WTC11 (cell line): ENCODE measurements at regions of chr16 and their contacts with region 1.

Region 1: DNA sequence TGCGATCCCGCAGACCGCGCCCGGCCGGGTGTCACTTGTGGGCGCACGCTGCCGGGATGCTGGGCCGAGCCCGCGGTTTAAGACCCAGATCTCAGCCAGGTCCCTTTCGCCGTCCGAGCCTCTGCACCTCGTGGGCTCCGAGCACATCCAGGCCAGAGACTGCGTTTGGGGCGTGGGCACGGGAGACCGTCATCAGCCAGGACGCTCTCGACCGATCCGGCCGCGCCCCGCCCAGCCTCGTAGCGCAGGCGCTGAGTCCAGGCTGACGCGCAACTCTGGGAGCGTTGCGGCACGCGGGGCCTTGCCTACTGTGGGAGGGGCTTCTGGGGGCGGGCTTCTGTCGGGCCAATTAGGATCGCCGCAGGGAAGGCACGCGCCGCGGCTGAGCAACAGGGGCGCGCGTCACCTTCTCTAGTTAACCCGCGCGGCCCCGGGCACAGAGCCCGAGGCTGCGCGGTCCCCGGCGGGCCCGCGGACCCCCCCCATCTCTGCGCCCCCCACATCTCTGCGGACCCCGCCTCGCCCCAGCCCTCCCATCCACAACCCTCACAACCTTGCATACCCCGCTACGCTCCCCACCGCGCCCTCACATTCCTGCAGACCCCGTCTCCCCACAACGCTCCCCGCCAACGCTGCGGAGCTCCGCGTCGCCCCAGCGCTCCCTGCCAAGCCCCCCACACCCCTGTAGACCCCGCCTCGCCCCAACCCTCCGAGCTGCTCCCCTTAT is 722 bp upstream of the CEMP1 start:
- DNase-seq: peak; percentile 98
- ATAC-seq: peak; percentile 88
- H3K4me3 Mint-ChIP-seq: peak overlapping the region; percentile 94
- H3K27ac Mint-ChIP-seq: peak overlapping the region; percentile 98
- H3K4me1 Mint-ChIP-seq: 0 out of 2 replicates have a peak, but pooled peaks cover 5% of the 10 kb centered on the region
- H3K27me3 Mint-ChIP-seq: peaks cover 8% of the 10 kb centered on the region; the same call in 1 of the 2 replicates
- CTCF ChIP-seq: no peak

Region 2: DNA sequence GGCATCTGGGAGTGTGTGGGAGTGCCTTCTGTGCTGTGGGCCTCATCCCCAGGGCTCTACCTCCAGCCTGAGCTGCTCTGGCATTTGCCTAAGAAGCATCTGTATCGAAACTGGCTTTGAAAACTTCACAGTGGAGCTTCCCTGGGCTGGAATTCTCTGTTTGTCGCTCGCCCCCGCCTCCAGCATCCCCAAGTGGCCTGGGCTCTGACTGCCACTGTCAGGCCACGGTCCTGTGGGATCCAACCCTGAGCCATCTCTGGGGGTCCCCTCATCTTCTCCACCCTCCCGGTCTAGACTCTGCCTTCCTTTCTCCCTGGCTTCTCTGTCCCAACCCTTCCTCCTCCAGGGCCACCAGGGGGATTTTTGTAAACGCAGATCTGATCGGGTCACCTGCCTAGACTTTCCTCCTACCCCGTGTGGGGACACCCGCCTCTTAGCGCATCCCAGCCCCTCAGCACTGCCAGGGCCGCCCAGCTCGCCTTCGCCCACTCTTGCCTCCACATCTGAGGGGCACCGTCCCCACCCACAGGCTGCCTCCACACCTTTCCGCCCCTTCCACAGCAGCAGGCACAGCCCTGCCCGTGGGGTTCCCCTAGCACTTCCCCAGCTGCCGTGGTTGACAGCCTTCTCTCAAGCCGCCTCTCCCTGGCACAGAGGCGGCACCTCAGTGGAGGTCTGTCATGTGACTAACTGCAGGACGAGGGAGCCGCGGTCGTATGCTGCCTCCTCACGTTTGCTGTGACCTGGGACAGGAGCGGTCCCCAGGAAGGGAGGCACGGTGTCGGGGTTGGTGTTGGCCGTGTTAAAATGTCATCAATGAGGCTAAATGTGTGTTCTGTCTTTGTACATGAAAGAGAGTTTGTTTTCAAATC is 45.0 kb before region 1 on chr16:
- CTCF ChIA-PET with region 1: no interaction called
- POLR2A ChIA-PET with region 1: no interaction called
- DNase-seq: no peak
- ATAC-seq: peak; percentile 15; the same call in 1 of the 2 replicates
- H3K4me3 Mint-ChIP-seq: no peak overlapping the region
- H3K27ac Mint-ChIP-seq: peak overlapping the region; percentile 54
- H3K4me1 Mint-ChIP-seq: 0 out of 2 replicates have a peak, but pooled peaks cover 4% of the 10 kb centered on the region
- H3K27me3 Mint-ChIP-seq: no peaks in the 10 kb centered on the region; the same call in 1 of the 2 replicates
- CTCF ChIP-seq: no peak

Region 3: DNA sequence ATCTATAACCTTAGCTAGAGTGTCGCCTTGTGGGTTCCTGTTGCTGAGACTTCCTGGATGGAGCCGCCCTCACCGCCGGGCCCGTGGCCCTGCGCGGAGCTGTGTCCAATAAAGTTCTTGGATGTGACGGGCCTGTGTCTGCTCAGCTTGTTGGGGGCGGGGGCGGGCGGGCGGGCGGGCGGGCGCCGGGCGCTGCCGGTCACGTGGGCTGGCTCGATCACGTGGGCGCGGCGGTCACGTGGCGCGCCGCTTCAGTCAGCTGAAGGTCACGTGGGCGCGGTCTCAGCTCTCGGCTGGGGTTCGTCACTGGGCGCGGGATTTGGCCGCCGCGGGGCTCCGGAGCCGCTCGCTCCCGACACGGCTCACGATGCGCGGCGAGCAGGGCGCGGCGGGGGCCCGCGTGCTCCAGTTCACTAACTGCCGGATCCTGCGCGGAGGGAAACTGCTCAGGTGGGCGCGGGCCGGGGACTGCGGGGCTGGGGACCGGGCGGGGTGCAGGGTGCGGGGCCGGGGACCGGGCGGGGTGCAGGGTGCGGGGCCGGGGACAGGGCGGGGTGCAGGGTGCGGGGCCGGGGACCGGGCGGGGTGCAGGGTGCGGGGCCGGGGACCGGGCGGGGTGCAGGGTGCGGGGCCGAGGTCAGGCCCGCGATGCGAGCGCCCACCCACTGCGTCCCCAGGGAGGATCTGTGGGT is 11.7 kb before region 1 on chr16 and contains the start of gene AMDHD2:
- CTCF ChIA-PET with region 1: interaction called, 13 read pairs
- POLR2A ChIA-PET with region 1: interaction called, 17 read pairs
- DNase-seq: peak; percentile 86
- ATAC-seq: peak; percentile 28
- H3K4me3 Mint-ChIP-seq: peak within 1 kb of the TSS; percentile 75
- H3K27ac Mint-ChIP-seq: peak within 1 kb of the TSS; percentile 97
- H3K4me1 Mint-ChIP-seq: peaks cover 27% of the 10 kb centered on the region
- H3K27me3 Mint-ChIP-seq: no peaks in the 10 kb centered on the region
- CTCF ChIP-seq: no peak
- total RNA-seq, gene AMDHD2: 60.1 to 70.9 TPM (median 60.3 TPM) in 3 replicates